WTC11 (cell line): ENCODE measurements at regions of chr11 and their contacts with region 1.

Region 1: DNA sequence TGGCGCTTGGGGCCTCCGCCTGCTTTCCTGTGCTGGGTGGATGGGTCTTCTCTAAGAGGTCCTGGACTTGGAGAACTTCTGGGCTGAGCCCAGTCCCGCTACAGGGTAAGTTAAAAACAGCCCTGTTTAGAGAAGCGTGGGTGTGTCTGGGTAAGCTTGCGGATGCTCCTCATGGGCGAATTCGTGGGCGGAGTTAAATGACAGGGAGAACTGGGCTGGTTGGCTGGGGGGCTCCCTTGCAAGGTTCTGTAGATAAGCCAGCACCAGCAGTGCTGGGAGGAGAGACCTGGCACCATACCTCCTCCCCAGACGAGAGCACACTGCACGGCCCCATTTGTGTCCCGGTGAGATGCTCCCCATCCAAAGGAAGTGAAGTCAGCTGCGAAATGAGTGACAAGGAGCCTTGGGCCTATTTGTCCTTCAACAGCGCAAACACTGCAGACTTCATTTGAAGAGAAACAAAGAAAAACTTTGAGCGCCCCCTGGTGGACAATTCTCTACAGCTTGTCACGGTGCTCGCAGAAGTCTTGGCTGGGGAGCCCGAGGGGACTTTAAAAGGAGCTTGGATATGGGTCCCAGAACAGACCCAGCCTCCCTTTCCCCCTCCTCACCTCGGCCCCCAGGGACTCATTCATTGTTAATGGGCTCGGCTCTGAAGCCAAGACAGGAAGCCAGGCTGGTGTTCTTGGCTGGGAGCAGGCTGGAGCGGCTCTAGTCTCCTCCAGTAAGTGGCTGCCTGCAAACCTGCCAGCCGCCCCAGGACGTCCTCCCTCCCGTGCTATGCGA is 39.5 kb downstream of the TP53I11 start:
- DNase-seq: peak; percentile 94
- ATAC-seq: peak; percentile 74
- H3K4me3 Mint-ChIP-seq: peak overlapping the region; percentile 54
- H3K27ac Mint-ChIP-seq: no peak overlapping the region
- H3K4me1 Mint-ChIP-seq: peaks cover 36% of the 10 kb centered on the region
- H3K27me3 Mint-ChIP-seq: no peaks in the 10 kb centered on the region
- CTCF ChIP-seq: peak; percentile 87

Region 2: DNA sequence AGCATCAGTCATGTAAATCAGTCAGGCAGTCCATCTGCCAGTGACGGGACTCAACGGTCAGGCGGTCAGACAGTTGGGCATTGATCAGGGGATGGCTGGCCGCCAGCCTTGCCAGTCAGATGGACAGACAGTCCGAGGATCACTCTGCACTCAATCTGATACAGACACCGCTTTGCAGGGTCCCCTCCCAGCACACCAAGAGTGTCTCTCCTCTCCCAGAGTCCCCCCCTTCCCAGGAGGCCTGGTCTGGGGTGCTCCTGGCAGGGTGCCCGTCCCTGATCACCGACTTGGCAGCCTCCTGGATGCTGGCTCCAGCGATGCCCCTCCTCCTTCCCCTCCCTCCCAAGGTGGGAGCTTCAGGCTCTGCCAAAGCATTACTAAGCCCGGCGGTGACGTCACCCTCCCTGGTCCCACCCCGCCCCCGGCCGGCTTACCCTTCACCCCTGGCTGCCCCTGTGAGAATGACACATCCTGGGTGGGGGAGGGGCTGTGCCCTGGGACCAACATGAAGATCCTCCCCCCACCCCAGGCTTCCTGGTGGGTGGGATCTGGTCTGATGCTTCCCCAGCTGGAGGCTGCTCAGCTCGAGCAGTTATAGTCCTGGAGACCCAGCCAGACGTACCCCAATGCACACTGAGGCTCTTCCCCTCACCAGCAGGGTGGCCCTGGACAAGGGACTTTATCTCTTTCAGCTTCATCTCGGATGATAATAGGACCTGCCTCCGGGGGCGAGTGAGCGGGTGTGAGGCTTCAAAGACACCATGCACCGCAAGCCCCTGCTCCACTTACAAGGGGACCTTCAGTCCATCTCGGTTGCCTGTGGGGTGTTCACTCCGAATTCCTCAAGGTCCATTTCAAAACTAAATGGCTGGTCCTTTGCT is 276.6 kb before region 1 on chr11:
- CTCF ChIA-PET with region 1: interaction called, 19 read pairs
- POLR2A ChIA-PET with region 1: no interaction called
- DNase-seq: peak; percentile 80
- ATAC-seq: peak; percentile 79
- H3K4me3 Mint-ChIP-seq: no peak overlapping the region
- H3K27ac Mint-ChIP-seq: no peak overlapping the region
- H3K4me1 Mint-ChIP-seq: peaks cover 29% of the 10 kb centered on the region
- H3K27me3 Mint-ChIP-seq: no peaks in the 10 kb centered on the region; the same call in 1 of the 2 replicates
- CTCF ChIP-seq: no peak

Region 3: DNA sequence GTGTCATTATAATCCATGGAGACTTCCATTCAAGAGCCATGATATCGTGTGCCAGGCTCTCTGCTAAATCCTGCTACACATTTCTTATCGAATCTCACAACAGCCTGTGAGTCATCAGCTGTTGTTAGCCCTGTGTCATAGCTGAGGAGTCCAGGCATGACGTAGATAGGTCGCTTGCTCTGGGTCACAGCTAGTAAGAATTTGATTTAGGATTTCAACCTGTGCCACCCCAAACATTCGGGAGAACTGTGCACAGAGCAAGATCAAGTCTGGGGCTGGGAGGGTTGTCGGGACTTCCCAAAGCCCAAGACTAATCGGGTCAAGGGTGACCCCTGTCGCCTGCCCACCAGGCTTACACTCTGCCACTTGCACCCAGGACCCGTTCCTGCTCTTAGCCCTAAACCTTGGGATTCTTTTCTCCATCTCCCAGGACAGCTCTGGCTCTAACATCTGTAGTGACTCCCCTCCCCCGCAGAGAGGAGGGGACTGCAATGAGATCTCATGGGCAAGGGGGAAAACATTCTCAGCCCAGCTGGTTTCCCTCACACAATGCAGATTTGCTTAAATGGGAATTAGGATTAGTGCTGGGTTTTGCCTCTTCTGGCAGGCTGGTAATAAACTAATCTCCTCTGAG is 150.2 kb before region 1 on chr11:
- CTCF ChIA-PET with region 1: interaction called, 20 read pairs
- POLR2A ChIA-PET with region 1: no interaction called
- DNase-seq: peak; percentile 66
- ATAC-seq: peak; percentile 94
- H3K4me3 Mint-ChIP-seq: no peak overlapping the region
- H3K27ac Mint-ChIP-seq: 0 out of 2 replicates have a peak overlapping the region, but pooled peaks have one; percentile 3
- H3K4me1 Mint-ChIP-seq: peaks cover 48% of the 10 kb centered on the region
- H3K27me3 Mint-ChIP-seq: peaks cover 17% of the 10 kb centered on the region
- CTCF ChIP-seq: peak; percentile 57

Region 4: GRCh38 chr11:44823006-44823405 is 88.2 kb before region 1 on chr11:
- CTCF ChIA-PET with region 1: interaction called, 35 read pairs
- POLR2A ChIA-PET with region 1: no interaction called
- DNase-seq: peak; percentile 51
- ATAC-seq: peak; percentile 18
- H3K4me3 Mint-ChIP-seq: no peak overlapping the region
- H3K27ac Mint-ChIP-seq: no peak overlapping the region
- H3K4me1 Mint-ChIP-seq: peaks cover 41% of the 10 kb centered on the region
- H3K27me3 Mint-ChIP-seq: peaks cover 23% of the 10 kb centered on the region
- CTCF ChIP-seq: no peak

Region 5: DNA sequence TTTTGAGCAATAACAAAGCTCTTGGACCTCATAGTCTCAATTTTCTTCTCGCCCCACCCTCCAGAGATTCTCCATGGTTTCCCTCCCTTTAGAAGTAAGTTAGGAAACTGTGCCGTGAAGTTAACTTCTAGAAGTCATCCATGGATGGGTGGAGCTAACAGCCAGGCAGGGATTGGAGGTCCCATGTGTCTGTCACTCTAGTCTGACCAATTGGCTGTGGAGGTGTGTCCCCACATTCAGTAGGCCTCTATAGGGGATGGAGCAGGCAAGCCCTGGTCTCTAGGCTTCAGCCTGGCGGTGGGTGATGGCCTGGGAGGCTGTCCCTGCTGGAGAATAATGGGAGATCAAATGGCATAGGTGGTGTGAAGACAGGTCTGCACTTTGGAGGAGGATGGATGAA is 11.3 kb before region 1 on chr11:
- CTCF ChIA-PET with region 1: interaction called, 38 read pairs
- POLR2A ChIA-PET with region 1: interaction called, 3 read pairs
- DNase-seq: peak; percentile 71
- ATAC-seq: peak; percentile 95
- H3K4me3 Mint-ChIP-seq: no peak overlapping the region
- H3K27ac Mint-ChIP-seq: no peak overlapping the region
- H3K4me1 Mint-ChIP-seq: peaks cover 12% of the 10 kb centered on the region
- H3K27me3 Mint-ChIP-seq: no peaks in the 10 kb centered on the region
- CTCF ChIP-seq: no peak